Activated naive CD4-positive, alpha-beta T cell treated with anti-CD3 and anti-CD28 coated beads, Interleukin-2, amount 10 ng/mL, durations not matched to agents 7 days and 5 days (primary cell): ENCODE measurements at regions of chr3 and their contacts with region 1.

Region 1: DNA sequence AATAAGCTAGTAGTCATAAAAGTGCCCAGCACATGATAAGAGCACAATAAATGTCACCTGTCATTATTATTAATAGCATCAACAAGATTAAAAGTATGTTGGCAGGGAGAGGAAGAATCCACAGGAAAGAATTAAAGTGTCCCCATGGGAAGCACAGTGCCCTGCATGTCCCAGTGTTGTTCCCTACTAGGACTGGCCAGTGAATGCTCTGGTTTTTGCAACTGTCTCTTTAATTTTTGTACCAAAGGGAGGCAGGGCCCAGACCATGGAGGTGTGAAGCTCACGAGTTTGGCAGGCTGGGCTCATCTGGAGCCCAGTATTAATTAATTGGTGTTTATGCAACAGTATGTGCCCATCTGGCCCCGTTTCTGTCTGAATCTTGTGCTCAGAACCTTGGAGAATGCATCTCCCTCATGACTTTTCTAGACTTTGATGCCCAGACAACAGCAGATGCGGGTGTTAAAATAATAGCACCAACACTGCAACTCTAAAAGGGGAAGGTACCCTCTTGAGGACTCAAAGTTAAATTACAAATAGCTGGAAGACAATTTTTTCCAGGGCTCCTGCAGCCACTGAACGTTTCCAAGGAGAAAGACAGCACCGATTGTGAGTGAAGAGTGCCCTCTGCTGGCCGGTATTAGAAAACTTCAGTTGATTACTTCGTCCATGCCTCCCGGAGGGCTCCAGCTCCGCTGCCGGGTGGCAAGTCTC is 71.9 kb upstream of the SPATA12 start:
- DNase-seq: peak; percentile 79
- H3K4me3 Mint-ChIP-seq: no peak overlapping the region
- H3K27ac Mint-ChIP-seq: no peak overlapping the region
- H3K4me1 Mint-ChIP-seq: peaks cover 27% of the 10 kb centered on the region
- H3K27me3 Mint-ChIP-seq: peaks cover 27% of the 10 kb centered on the region

Region 2: DNA sequence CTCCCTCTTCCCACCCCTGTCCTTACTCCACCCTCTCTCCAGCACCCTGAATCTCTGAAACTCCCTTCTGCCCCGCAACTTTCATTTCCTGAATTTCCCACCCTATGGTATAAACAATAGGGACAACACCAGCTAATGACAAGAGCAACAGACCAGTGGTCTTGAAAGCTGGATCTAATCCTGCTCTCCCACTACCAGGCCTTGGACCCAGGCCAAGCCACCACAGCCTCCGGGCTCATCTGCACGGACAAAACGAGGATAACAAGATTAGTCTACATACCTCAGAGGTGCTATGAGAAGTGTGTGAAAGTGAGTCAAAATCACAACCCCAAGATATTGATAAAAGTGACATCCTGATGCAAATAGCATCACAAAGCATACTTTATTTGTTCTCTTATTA is 648.9 kb before region 1 on chr3:
- CTCF ChIA-PET with region 1: interaction called, 13 read pairs
- DNase-seq: no peak
- H3K4me3 Mint-ChIP-seq: no peak overlapping the region
- H3K27ac Mint-ChIP-seq: no peak overlapping the region
- H3K4me1 Mint-ChIP-seq: no peaks in the 10 kb centered on the region
- H3K27me3 Mint-ChIP-seq: peaks cover 19% of the 10 kb centered on the region

Region 3: DNA sequence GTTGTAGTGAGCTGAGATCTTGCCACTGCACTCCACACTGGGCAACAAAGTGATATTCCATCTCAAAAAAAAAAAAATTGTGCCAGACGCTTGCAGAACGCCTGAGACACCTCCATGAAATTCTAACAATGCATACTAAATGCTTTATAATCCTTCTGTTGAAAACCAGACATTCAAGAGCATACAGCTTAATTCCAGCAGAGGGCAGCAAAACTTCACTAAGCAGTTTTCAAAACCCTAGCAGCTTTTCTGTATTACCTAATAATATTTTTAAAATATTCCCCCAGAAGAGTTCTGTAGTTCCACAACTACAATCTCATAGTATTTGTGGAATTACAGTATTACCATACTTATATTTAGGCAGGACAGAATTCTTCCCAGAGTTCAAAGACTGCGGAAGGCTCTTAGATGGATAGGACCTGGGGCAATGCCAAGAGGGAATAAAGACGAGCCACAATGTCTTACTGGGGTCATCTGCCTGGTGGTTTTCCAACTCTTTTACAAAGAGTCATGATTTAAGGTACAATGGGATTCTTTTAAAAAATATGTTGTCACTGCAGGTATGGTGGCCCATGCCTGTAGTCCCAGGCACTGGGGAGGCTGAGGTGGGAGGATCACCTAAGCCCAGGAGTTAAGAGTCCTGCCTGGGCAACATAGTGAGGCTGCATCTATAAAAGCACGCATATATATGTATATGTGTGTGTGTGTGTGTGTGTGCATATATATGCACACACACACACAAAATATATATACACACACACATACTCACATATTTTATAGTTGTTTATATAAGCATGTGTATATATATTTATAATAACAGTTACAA is 285.9 kb before region 1 on chr3:
- CTCF ChIA-PET with region 1: interaction called, 206 read pairs
- DNase-seq: peak; percentile 63
- H3K4me3 Mint-ChIP-seq: no peak overlapping the region
- H3K27ac Mint-ChIP-seq: no peak overlapping the region
- H3K4me1 Mint-ChIP-seq: peaks cover 33% of the 10 kb centered on the region
- H3K27me3 Mint-ChIP-seq: peaks cover 7% of the 10 kb centered on the region

Region 4: DNA sequence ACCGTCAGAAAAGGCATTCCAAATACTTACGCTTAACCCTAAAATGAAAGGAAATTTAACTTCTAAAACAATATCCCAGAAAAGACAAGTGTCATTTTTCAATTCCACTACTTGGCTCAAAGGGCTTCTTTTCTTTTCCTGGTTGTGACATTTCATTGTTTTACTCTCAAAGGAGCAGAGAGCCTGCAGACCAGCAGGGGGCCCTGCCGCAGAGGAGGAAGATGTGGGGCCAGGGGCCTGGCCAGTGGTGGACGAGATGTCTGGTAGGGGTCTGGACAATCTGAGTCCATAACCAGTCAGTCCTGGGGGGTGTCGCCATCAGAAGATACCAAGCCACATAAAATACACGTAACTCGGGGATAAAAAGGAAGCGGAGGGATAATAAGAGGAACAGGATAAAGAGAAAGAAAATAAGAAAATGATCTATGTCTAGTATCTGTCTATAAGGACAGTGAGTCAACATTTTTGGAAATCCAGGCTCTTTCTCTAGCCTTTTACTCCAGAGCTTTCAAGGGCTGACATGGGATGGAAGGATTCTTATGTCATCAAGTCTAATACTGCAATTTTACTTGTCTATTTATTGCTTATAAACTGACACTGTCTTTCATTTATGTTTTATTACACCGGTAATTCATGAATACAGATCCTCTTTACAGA is 132.6 kb before region 1 on chr3:
- CTCF ChIA-PET with region 1: interaction called, 11 read pairs
- DNase-seq: peak; percentile 48
- H3K4me3 Mint-ChIP-seq: no peak overlapping the region
- H3K27ac Mint-ChIP-seq: no peak overlapping the region
- H3K4me1 Mint-ChIP-seq: peaks cover 25% of the 10 kb centered on the region
- H3K27me3 Mint-ChIP-seq: no peaks in the 10 kb centered on the region

Region 5: GRCh38 chr3:56923521-56924224 is 64.9 kb before region 1 on chr3:
- CTCF ChIA-PET with region 1: interaction called, 24 read pairs
- DNase-seq: peak; percentile 66
- H3K4me3 Mint-ChIP-seq: peak overlapping the region; percentile 25
- H3K27ac Mint-ChIP-seq: peak overlapping the region; percentile 84
- H3K4me1 Mint-ChIP-seq: peaks cover 85% of the 10 kb centered on the region
- H3K27me3 Mint-ChIP-seq: no peaks in the 10 kb centered on the region